ENCODE measurements at regions of chr5 and their contacts with region 1.

Region 1: DNA sequence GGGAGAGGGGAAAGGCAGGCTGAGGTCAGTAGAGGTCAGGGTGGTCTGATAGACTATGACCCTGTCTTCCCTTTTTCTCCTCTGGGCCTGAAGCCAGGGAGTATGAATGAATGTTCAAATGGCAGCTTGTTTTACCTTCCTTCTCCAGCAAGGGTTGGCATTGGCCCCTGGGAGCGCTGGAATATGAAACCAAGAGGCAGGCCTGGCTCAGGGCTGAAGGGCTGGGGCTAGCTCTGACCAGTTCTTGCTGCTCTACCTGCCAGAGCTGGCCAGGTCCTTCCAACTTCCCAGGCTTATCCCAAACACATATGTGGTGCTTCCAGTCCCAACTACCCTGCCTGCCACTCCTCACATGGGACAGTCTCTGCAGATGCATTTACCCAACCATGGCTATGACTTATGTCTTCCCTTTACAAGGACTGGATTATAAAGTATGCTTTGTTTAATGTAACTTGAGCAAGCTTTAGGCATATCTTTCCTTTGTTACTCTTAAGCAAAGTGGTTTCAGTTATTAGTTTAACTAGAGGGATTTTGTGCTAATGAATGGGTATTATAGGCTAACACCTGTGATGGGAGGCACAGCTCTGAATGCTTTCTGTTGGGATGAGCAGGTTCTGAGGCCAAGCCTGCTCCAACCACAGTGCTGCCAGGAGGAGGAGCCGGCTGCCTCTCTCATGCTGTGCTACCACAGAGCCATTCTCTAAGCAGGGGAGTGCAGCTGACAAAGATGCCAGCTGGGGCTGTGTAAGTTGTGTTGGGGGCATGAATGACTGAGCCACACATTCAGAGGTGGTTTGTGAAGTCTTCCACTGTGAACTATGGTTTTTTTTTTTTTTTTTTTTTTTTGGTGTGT is 6.1 kb downstream of the CCNI2 start:
- DNase-seq: no peak
- H3K4me3 Mint-ChIP-seq: no peak overlapping the region
- H3K27ac Mint-ChIP-seq: peak overlapping the region; percentile 5
- H3K4me1 Mint-ChIP-seq: peaks cover 42% of the 10 kb centered on the region
- H3K27me3 Mint-ChIP-seq: peaks cover 4% of the 10 kb centered on the region

Region 2: DNA sequence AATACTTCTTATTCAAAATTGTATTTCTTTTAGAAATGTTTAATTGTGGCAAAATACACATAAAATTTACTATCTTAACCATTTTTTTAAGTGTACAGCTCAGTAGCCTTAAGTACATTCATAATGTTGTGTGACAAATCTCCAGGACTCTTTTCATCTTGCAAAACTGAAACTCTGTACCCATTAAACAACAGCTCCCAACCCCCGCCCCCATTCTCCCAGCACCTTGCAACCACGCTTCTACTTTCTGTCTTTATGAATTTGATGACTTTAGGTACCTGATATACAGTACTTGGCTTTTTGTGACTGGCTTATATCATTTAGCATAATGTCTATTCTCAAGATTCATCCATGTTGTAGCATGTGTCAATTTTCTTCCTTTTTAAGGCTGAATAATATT is 207.3 kb before region 1 on chr5:
- intact Hi-C with region 1: loop called (anchors 5 kb)
- DNase-seq: no peak
- H3K4me3 Mint-ChIP-seq: no peak overlapping the region
- H3K27ac Mint-ChIP-seq: peak overlapping the region; percentile 41
- H3K4me1 Mint-ChIP-seq: peaks cover 61% of the 10 kb centered on the region
- H3K27me3 Mint-ChIP-seq: peaks cover 6% of the 10 kb centered on the region

Region 3: GRCh38 chr5:132777209-132778069 is 24.1 kb after region 1 on chr5 and contains the start of gene SEPTIN8:
- intact Hi-C with region 1: loop called (anchors 2 kb)
- DNase-seq: peak; percentile 46
- H3K4me3 Mint-ChIP-seq: peak within 1 kb of the TSS; percentile 82
- H3K27ac Mint-ChIP-seq: peak within 1 kb of the TSS; percentile 76
- H3K4me1 Mint-ChIP-seq: peaks cover 29% of the 10 kb centered on the region
- H3K27me3 Mint-ChIP-seq: peaks cover 65% of the 10 kb centered on the region
- total RNA-seq, gene SEPTIN8: 34.9 and 35.9 TPM in 2 replicates